ENCODE measurements at regions of chr20 and their contacts with region 1.

Region 1: GRCh38 chr20:44187051-44187762 is at the start of gene JPH2:
- DNase-seq: no peak
- H3K4me3 ChIP-seq: peak within 1 kb of the TSS; percentile 51
- H3K27ac ChIP-seq: peak within 1 kb of the TSS; percentile 85
- H3K27me3 ChIP-seq: no peaks in the 10 kb centered on the region
- CTCF ChIP-seq: no peak
- polyA plus RNA-seq, gene JPH2: 1.3 and 1.6 TPM in 2 replicates

Region 2: GRCh38 chr20:43448748-43449535 is 738.3 kb before region 1 on chr20:
- CTCF ChIA-PET with region 1: interaction called, 10 read pairs
- POLR2A ChIA-PET with region 1: no interaction called
- DNase-seq: no peak
- H3K4me3 ChIP-seq: no peak overlapping the region
- H3K27ac ChIP-seq: no peak overlapping the region
- H3K27me3 ChIP-seq: peaks cover 18% of the 10 kb centered on the region
- CTCF ChIP-seq: peak; percentile 78

Region 3: GRCh38 chr20:43955062-43955749 is 232.0 kb before region 1 on chr20:
- CTCF ChIA-PET with region 1: no interaction called
- POLR2A ChIA-PET with region 1: no interaction called
- DNase-seq: peak; percentile 62
- H3K4me3 ChIP-seq: no peak overlapping the region
- H3K27ac ChIP-seq: peak overlapping the region; percentile 79
- H3K27me3 ChIP-seq: no peaks in the 10 kb centered on the region
- CTCF ChIP-seq: no peak

Region 4: DNA sequence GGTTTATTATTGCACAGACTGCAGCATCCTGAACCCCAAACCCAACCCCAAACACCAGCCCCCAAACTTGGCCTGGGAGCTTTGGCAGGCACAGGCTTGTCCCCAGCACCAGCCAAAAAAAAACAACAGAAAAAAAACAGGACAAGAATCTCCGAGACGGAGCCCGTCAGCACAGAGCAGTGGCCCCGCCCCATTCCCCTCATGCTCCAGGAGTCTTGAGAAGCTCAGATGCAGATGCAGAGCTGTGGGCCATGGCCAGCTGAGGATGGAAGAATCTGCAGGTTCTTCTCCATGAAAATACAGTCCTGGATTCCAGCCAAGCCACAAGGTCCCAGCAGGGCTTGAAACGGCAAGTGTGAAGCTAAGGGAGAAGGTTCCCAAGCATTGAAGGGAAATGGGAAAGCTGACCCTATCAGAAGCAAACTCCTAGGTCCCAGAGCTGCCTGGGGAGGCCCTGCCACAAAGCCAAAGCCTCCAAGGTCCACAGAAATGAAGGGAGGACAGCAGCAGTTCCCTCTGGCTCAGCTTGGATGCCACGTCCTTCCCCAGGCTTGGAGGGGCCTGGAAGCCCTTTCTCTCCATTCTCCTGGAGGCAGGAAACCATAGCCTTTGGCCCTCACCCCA is 75.4 kb before region 1 on chr20:
- CTCF ChIA-PET with region 1: interaction called, 402 read pairs
- POLR2A ChIA-PET with region 1: interaction called, 12 read pairs
- DNase-seq: no peak
- H3K4me3 ChIP-seq: no peak overlapping the region
- H3K27ac ChIP-seq: no peak overlapping the region
- H3K27me3 ChIP-seq: peaks cover 3% of the 10 kb centered on the region
- CTCF ChIP-seq: no peak

Region 5: GRCh38 chr20:44137210-44137801 is 49.9 kb before region 1 on chr20:
- CTCF ChIA-PET with region 1: interaction called, 15 read pairs
- POLR2A ChIA-PET with region 1: interaction called, 8 read pairs
- DNase-seq: peak; percentile 21
- H3K4me3 ChIP-seq: no peak overlapping the region
- H3K27ac ChIP-seq: peak overlapping the region; percentile 57
- H3K27me3 ChIP-seq: peaks cover 5% of the 10 kb centered on the region
- CTCF ChIP-seq: no peak

Region 6: GRCh38 chr20:44166477-44166876 is 20.7 kb before region 1 on chr20:
- CTCF ChIA-PET with region 1: interaction called, 14 read pairs
- POLR2A ChIA-PET with region 1: no interaction called
- DNase-seq: no peak
- H3K4me3 ChIP-seq: no peak overlapping the region
- H3K27ac ChIP-seq: peak overlapping the region; percentile 47
- H3K27me3 ChIP-seq: peaks cover 5% of the 10 kb centered on the region
- CTCF ChIP-seq: no peak